ENCODE measurements at regions of chr6 and their contacts with region 1.

Region 1: GRCh38 chr6:90375681-90376439 is 79.2 kb upstream of the BACH2 start:
- DNase-seq: no peak
- H3K4me3 ChIP-seq: no peak overlapping the region
- H3K27ac ChIP-seq: no peak overlapping the region
- H3K4me1 ChIP-seq: no peaks in the 10 kb centered on the region
- H3K27me3 ChIP-seq: no peaks in the 10 kb centered on the region
- CTCF ChIP-seq: no peak
- EP300 ChIP-seq: no peak
- POLR2A ChIP-seq: no peak

Region 2: DNA sequence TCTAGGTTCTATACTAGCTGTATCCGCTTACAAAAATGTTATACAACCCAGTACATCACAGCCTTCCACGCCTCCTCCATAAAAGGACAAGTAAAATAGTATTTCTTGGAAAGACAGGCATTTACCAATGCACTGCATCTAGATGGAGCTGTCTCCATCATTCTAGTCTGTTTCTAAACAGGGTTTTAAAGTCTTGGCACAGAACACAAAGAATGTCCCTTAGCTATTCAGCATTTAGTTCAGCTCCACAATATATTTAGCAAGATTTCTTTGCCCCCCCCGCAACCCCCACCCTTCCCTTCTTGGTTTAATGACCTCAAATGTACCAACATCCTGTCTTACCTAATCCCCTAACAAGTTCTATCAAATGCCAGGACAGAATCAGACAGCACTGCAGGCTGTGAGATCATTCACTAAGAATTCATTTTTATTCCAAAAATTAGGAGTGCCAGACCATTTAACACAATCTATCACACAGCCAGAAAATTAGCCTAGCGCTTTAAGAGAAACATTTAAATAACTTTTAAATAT is 277.8 kb before region 1 on chr6:
- intact Hi-C with region 1: loop called (anchors 10 kb)
- DNase-seq: peak; percentile 97
- H3K4me3 ChIP-seq: no peak overlapping the region
- H3K27ac ChIP-seq: peak overlapping the region; percentile 81 to 85 (median 82)
- H3K4me1 ChIP-seq: peaks cover 22 to 33% (median 32%) of the 10 kb centered on the region in 4 donors
- H3K27me3 ChIP-seq: no peaks in the 10 kb centered on the region
- CTCF ChIP-seq: peak; percentile 33 to 54 (median 44)
- EP300 ChIP-seq: no peak
- POLR2A ChIP-seq: no peak

Region 3: DNA sequence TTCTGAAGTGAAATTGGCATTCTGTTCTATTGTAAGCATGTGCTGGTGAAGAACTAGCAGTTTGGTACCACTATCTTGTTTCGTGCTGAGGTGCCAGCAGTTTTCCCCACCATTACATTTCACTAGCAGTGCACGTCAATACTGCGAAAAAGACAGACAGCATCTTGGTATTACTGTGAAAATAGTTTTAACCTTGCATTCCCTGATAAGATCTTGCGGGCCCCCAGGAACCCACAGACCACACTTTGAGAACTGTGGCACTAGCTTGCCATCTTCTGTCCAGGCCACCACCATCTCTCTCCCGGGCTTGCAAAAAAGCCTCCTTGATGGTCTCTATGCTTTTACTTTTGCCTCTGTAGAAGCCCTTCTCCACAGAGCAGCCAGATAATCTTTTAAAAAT is 264.9 kb before region 1 on chr6:
- intact Hi-C with region 1: no loop called
- DNase-seq: no peak
- H3K4me3 ChIP-seq: no peak overlapping the region
- H3K27ac ChIP-seq: no peak overlapping the region
- H3K4me1 ChIP-seq: peaks cover 0 to 6% (median 2%) of the 10 kb centered on the region in 4 donors
- H3K27me3 ChIP-seq: no peaks in the 10 kb centered on the region
- CTCF ChIP-seq: no peak
- EP300 ChIP-seq: no peak
- POLR2A ChIP-seq: no peak

Measured in esophagus muscularis mucosa (tissue), 4 donors.